Lower leg skin (tissue), 4 donors: ENCODE measurements at regions of chr15 and their contacts with region 1.

Region 1: GRCh38 chr15:90249203-90249863 is at the start of gene TTLL13:
- DNase-seq: peak; percentile 88 to 98
- H3K4me3 ChIP-seq: peak within 1 kb of the TSS; percentile 20
- CTCF ChIP-seq: no peak
- POLR2A ChIP-seq: no peak
- total RNA-seq, gene TTLL13: 0.63 TPM in 1 of 4 donors, not detected in the others

Region 2: DNA sequence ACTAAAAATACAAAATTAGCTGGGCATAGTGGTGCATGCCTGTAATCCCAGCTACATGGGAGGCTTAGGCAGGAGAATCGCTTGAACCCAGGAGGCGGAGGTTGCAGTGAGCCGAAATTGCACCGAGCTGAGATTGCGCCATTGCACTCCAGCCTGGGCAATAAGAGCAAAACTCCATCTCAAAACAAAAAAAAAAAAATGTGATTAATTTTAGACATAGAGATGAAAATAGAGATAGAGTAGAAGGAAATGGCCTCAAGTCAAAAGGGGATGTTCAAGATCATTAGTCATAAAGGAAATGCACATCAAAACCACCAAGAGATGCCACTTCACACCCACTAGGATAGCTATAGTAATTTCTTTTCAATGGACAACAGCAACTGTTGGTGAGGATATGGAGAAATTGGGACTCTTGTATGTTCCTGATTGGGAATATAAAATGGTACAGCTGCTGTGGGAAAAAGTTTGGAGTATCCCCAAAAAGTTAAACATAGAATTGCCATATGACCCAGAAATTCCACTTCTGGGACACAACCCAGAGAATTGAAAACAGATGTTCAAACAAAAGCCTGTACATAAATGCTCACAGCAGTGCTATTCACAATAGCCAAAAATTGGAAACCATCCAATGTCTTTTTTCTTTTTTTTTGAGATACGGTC is 1105.7 kb before region 1 on chr15:
- intact Hi-C with region 1: no loop called
- DNase-seq: peak in 1 of 2 donors; percentile 67
- H3K4me3 ChIP-seq: no peak overlapping the region
- CTCF ChIP-seq: no peak
- POLR2A ChIP-seq: no peak

Region 3: GRCh38 chr15:90233376-90234095 is 15.8 kb before region 1 on chr15 and contains the start of gene CIB1:
- intact Hi-C with region 1: loop called (anchors 2 kb)
- DNase-seq: peak; percentile 94 to 99
- H3K4me3 ChIP-seq: peak within 1 kb of the TSS; percentile 68
- CTCF ChIP-seq: no peak
- POLR2A ChIP-seq: no peak
- total RNA-seq, gene CIB1: 10.0 to 32.2 (median 22.9) TPM

Region 4: DNA sequence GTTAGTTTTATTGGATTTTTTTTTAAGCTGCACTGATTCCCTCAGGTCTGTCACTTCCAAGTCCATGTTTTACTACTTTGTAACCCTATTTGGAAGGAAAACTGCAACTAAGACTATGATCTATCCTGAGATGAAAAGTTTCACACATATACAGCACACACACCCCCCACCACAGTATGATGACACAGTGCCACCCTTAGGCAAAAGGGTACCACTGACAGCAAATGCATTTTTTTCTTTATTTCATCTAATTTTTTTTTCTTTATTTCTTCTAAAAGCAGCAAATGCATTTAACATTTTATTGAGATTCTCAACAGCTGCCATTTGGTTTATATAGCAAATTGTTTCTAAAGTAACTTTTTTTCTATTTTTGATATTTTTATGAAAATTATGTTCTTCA is 37.3 kb after region 1 on chr15:
- intact Hi-C with region 1: loop called (anchors 2 kb)
- DNase-seq: no peak
- H3K4me3 ChIP-seq: no peak overlapping the region
- CTCF ChIP-seq: no peak
- POLR2A ChIP-seq: no peak